ENCODE measurements at regions of chr7 and their contacts with region 1.

Region 1: DNA sequence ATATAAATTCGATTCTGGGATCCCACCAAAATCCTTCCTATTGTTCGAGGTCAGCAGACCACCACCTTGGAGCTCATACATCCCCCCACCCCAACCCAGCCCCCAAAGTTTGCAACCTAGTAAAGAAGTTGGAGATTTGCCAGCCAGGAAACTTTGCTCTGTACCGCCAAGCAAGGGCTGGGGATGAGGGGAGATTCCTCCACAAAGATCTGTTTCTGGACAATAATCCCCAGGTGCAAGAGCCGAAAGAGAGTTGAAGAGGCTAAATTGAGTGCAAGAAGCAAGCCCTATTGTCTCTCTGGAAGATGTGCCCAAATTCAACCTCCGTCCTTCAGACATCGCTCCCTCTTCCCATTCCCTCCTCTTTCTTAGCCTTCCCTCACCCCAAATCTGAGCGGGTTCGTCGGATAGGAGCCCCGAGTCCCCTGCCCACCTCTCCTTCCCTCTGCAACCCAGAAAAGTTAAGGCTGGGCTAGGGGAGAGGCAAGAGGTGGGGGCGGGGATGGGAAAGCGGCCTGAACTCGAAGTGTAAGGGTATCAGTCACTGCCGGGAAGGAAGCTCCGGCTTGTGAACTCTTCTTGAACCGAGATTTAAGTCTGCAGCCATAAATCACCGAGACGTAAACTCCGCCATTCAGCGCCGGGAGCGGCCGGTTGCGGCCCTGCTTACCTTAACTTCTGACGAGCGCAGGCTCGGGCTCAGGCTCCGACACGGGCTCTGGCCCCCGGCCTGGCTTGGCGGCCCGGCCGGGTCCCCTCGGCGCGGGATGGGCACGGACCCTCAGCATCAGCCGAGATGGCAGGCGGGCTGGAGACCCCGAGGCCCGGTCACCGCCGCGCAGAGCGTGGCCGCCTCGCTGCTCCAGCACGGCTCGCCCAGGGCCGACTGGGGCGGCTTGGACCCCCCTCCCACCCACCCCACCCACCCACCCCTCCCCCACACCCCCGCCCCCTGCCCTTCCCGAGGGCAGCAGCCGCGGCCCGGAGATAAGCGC is 10.8 kb upstream of the HOXA2 start:
- DNase-seq: peak; percentile 59

Region 2: DNA sequence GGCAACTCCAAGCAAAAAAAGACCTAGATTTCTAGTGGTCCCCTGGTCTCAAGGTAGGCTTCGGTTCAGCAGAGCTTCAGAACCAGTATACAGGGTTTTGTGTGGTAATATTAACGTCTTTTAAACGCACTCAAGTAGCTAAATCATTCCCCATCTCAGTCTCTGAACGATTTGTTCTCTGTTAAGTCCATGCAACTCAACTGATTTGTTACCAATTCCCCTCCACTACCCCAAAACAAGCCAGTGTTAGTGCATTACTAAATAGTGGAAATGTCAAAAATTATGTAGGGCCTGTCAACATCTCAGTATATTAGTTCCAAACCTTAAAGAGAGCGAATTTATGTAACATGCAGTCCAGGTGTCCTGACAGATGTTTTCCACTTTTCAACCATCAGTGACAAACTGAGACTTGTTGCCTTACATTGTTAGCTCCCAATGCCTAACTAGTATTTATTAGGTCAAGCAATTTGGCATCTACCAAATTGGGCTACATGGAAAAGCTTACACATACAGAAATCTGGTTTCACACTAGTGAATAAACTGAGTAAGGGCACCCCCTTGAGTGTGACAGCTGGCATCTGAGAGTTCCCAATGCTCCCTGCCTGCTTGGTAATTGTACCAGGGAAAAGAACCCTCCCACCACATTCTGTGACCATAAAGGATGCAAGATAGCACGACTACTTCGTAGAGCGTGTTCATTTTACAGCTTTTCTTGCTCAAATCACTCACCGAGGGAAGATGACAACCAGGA is 924.9 kb before region 1 on chr7:
- CTCF ChIA-PET with region 1: no interaction called
- POLR2A ChIA-PET with region 1: no interaction called
- DNase-seq: no peak

Region 3: DNA sequence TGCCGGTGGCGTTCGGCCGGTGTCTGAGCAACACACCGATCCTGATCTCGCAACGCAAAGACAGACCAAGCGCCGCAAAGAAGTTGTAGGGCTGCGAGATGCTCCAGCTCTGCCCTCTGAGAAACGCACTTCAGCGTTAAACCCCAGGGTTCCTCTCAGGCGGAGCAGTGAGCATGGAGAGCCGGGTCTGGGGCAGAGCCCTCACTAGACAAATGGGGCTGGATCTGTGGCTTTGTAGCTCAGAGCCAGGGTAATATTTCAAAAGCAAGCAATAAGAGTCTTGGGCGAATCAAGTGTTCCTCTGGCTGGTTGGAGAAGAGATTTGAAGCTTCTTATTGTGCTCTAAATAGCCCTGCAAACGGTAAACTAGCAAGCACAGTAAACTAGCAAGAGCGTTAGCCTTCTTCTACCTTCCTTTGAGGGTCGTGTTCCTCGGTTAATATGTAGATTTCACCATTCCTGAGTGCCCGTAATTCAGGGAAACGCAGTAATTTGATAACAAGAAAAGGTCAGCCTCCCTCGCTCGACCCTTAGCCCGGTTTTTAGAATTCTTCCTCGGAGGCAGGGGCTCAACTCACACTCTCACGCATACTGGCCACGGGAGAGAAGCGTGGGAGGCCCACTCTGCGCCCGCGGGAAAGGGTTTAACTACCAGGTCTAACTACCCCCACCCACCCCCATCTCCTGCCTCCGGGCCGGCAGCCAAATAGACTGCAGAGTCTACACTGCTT is 255.6 kb before region 1 on chr7:
- CTCF ChIA-PET with region 1: interaction called, 6 read pairs
- POLR2A ChIA-PET with region 1: interaction called, 10 read pairs
- DNase-seq: peak; percentile 53

Region 4: GRCh38 chr7:27130540-27131389 is 17.5 kb after region 1 on chr7 and contains the start of gene HOXA4:
- CTCF ChIA-PET with region 1: no interaction called
- POLR2A ChIA-PET with region 1: interaction called, 103 read pairs
- DNase-seq: peak; percentile 78

Region 5: GRCh38 chr7:27143023-27143949 is 30.0 kb after region 1 on chr7 and contains the start of gene HOXA5:
- CTCF ChIA-PET with region 1: interaction called, 4 read pairs
- POLR2A ChIA-PET with region 1: interaction called, 15 read pairs
- DNase-seq: peak; percentile 79

Measured in HEK293T (cell line).